ENCODE measurements at regions of chr21 and their contacts with region 1.

Region 1: DNA sequence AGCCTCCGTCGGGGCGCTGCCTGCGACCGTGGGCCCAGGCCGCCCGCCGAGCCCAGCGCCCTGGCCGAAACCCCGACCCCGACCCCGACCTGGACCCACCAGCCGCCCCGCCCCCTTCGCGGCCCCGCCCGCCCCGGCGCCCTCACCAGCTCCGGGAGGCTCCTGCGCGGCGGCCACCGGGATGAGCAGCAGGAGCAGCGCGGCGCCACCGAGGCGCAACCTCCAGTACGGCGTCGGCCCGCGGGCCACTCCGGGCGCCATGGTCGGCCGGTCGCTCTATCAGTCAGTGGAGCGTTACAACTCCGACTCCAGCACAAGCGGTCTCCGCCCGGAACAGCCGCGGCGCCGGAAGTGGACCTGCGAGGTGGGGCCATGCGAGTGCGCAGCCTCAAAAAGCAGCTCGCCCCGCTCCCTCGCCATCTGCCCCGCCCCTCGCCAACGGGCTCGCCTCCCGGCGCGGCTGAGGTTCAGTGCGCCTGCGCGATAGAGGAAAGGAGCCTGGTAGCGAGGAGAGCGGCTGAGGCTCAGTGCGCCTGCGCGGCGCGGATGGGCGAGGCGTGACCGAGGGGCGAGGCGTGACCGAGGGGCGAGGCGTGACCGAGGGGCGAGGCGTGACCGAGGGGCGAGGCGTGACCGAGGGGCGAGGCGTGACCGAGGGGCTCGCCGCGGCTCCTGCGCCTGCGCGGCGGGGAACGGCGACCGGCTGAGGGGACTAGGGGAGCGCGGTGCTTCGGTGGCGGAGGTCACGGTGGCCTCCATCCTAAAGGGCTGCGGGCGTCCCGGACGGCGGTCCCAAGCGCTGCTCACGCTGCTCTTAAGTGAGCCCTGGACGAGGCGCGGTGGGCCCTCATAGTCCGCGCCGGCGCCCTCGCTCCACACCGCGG is at the start of gene PTTG1IP:
- DNase-seq: peak; percentile 98 to 100 (median 99)
- ATAC-seq: peak; percentile 82
- H3K4me3 ChIP-seq: peak within 1 kb of the TSS; percentile 60 to 76
- H3K4me3 Mint-ChIP-seq: peak within 1 kb of the TSS; percentile 93
- H3K27ac ChIP-seq: peak within 1 kb of the TSS; percentile 62 to 68
- H3K27ac Mint-ChIP-seq: peak within 1 kb of the TSS; percentile 91
- H3K4me1 ChIP-seq: peaks cover 43% of the 10 kb centered on the region
- H3K4me1 Mint-ChIP-seq: peaks cover 53% of the 10 kb centered on the region
- H3K27me3 ChIP-seq: no peaks in the 10 kb centered on the region
- H3K27me3 Mint-ChIP-seq: no peaks in the 10 kb centered on the region
- CTCF ChIP-seq: no peak
- total RNA-seq, gene PTTG1IP: 71.0 to 73.3 TPM

Region 2: GRCh38 chr21:42892931-42893755 is 1980.5 kb before region 1 on chr21 and contains the start of gene NDUFV3:
- CTCF ChIA-PET with region 1: no interaction called
- POLR2A ChIA-PET with region 1: no interaction called
- intact Hi-C with region 1: loop called in 1 of 2 experiments (anchors 10 kb)
- DNase-seq: peak; percentile 100
- ATAC-seq: peak; percentile 96
- H3K4me3 ChIP-seq: peak within 1 kb of the TSS; percentile 70 to 94
- H3K4me3 Mint-ChIP-seq: peak within 1 kb of the TSS; percentile 85
- H3K27ac ChIP-seq: peak within 1 kb of the TSS; percentile 92 to 93
- H3K27ac Mint-ChIP-seq: peak within 1 kb of the TSS; percentile 98
- H3K4me1 ChIP-seq: peaks cover 14% of the 10 kb centered on the region
- H3K4me1 Mint-ChIP-seq: peaks cover 23% of the 10 kb centered on the region
- H3K27me3 ChIP-seq: no peaks in the 10 kb centered on the region
- H3K27me3 Mint-ChIP-seq: no peaks in the 10 kb centered on the region
- CTCF ChIP-seq: no peak
- total RNA-seq, gene NDUFV3: 18.0 to 18.2 TPM

Region 3: DNA sequence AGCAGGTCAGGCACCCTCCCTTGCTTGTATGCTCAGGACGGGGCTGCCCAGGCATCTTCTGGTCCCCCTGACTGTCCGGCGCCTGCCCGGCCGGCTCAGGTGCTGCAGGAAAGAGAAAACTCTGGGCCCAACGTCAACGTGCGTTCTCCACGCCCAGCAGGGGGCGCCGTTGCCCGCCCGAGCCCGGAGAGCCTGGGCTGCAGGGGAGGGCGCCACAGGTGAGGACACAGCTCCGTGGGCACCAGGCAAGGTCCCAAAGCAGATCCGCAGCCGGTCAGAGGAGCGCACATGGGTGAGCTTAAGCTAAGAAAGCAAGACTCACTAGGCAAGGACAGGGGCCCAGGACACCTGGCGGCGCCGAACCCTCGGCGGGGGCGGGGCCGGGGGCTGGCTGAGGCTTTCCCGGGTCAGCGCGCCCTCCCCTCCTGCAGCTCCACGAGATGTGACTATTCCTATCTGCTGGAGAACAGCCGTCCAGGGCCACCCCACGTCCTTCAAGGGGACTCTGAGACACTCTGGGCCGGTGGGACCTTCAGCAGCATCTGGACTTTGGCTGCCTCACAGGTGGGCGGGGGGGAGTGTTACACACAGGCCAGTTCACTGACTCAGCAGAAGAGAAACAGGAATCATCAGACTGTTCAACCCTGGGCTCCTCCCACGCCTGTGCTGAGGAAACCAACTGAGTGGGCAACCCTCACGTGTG is 362.9 kb before region 1 on chr21:
- CTCF ChIA-PET with region 1: interaction called, 9 read pairs
- POLR2A ChIA-PET with region 1: no interaction called
- intact Hi-C with region 1: loop called in 1 of 2 experiments (anchors 5 kb)
- DNase-seq: peak; percentile 66 to 94 (median 81)
- ATAC-seq: peak; percentile 95
- H3K4me3 ChIP-seq: peak overlapping the region; percentile 41 to 45
- H3K4me3 Mint-ChIP-seq: peak overlapping the region; percentile 60
- H3K27ac ChIP-seq: no peak overlapping the region
- H3K27ac Mint-ChIP-seq: no peak overlapping the region
- H3K4me1 ChIP-seq: peaks cover 11% of the 10 kb centered on the region
- H3K4me1 Mint-ChIP-seq: peaks cover 4% of the 10 kb centered on the region
- H3K27me3 ChIP-seq: no peaks in the 10 kb centered on the region
- H3K27me3 Mint-ChIP-seq: no peaks in the 10 kb centered on the region
- CTCF ChIP-seq: peak; percentile 93

Region 4: GRCh38 chr21:44845399-44846223 is 28.0 kb before region 1 on chr21:
- CTCF ChIA-PET with region 1: interaction called, 5 read pairs
- POLR2A ChIA-PET with region 1: no interaction called
- intact Hi-C with region 1: loop called (anchors 2 kb)
- DNase-seq: peak in 8 of 9 experiments; percentile 24 to 70 (median 47)
- ATAC-seq: peak; percentile 67
- H3K4me3 ChIP-seq: peak overlapping the region; percentile 37
- H3K4me3 Mint-ChIP-seq: peak overlapping the region; percentile 70
- H3K27ac ChIP-seq: no peak overlapping the region
- H3K27ac Mint-ChIP-seq: no peak overlapping the region
- H3K4me1 ChIP-seq: peaks cover 18% of the 10 kb centered on the region
- H3K4me1 Mint-ChIP-seq: peaks cover 13% of the 10 kb centered on the region
- H3K27me3 ChIP-seq: peaks cover 0 to 3% of the 10 kb centered on the region in 2 experiments
- H3K27me3 Mint-ChIP-seq: peaks cover 2% of the 10 kb centered on the region
- CTCF ChIP-seq: no peak

Region 5: DNA sequence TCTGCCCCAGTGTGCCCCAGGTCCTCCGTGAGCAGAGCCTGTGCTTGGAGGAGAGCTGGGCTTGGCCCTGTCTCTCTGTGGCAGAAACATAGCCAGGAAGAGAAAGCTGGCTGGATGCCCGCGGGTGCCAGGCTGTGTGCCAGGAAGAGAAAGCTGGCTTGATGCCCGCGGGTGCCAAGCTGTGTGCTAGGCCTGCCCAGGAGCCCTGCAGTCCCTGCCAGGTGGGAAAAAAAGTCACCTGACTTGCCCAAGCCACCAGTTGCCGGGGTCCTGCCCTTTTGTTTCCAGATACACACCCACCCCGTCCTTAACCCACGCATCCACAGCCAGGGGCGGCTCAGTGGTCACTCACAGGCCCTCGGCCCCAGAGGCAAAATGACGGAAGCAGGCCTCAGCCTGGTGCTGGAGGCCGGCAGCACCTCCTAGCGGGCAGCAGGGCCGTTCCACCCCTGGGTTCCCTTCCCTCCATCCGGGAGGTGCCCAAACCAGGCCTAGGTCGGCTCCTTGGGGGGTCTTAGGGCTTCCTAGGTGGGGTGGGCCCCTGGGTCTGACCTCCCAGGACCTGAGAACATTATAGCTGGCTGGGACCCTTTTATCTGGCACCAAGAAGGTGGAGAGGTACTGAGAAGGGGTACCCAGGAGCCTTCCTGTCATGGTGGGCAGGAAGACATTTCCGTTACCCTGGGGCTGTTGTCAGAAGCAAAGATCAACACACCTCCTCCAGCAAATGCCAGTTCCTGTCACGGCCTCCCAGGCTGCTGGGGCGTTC is 38.0 kb after region 1 on chr21:
- CTCF ChIA-PET with region 1: interaction called, 3 read pairs
- POLR2A ChIA-PET with region 1: interaction called, 6 read pairs
- intact Hi-C with region 1: loop called (anchors 1 to 2 kb)
- DNase-seq: peak; percentile 26 to 86 (median 71)
- ATAC-seq: peak; percentile 74
- H3K4me3 ChIP-seq: peak overlapping the region; percentile 41 to 42
- H3K4me3 Mint-ChIP-seq: peak overlapping the region; percentile 70
- H3K27ac ChIP-seq: peak overlapping the region; percentile 73 to 79
- H3K27ac Mint-ChIP-seq: peak overlapping the region; percentile 92
- H3K4me1 ChIP-seq: peaks cover 96% of the 10 kb centered on the region
- H3K4me1 Mint-ChIP-seq: peaks cover 79% of the 10 kb centered on the region
- H3K27me3 ChIP-seq: no peaks in the 10 kb centered on the region
- H3K27me3 Mint-ChIP-seq: no peaks in the 10 kb centered on the region
- CTCF ChIP-seq: peak; percentile 66

Region 6: GRCh38 chr21:45074048-45074817 is 200.6 kb after region 1 on chr21 and contains the start of gene ADARB1:
- CTCF ChIA-PET with region 1: no interaction called
- POLR2A ChIA-PET with region 1: interaction called, 5 read pairs
- intact Hi-C with region 1: loop called in 1 of 2 experiments (anchors 5 kb)
- DNase-seq: peak; percentile 24 to 87 (median 63)
- ATAC-seq: peak; percentile 55
- H3K4me3 ChIP-seq: peak within 1 kb of the TSS; percentile 58 to 69
- H3K4me3 Mint-ChIP-seq: peak within 1 kb of the TSS; percentile 95
- H3K27ac ChIP-seq: peak within 1 kb of the TSS; percentile 36 to 68
- H3K27ac Mint-ChIP-seq: peak within 1 kb of the TSS; percentile 92
- H3K4me1 ChIP-seq: peaks cover 38% of the 10 kb centered on the region
- H3K4me1 Mint-ChIP-seq: peaks cover 41% of the 10 kb centered on the region
- H3K27me3 ChIP-seq: no peaks in the 10 kb centered on the region
- H3K27me3 Mint-ChIP-seq: no peaks in the 10 kb centered on the region
- CTCF ChIP-seq: no peak
- total RNA-seq, gene ADARB1: 21.1 to 22.6 TPM

Measured in CD8-positive, alpha-beta T cell (primary cell).